ENCODE measurements at regions of chr19 and their contacts with region 1.

Region 1: DNA sequence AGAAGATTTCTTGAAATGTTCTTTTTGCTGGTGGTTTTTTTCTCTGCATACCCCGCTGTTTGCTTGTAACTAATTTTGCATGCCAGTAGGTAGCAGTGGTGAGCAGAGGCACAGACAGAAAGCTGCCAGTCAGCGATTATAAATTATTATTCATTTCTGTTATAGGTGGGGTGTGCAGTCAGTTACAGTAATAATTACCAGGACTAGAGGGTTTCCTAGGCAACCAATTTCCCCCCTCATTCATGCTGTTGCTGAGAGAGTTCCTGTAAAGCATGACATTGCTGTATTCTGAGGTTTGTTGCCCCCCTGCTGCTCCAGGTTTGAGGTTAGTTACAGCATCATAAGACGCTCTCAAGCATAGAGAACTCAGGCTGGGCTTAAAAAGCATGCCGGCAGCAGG is 104.5 kb downstream of the URI1 start:
- DNase-seq: peak; percentile 33
- ATAC-seq: peak; percentile 92
- H3K4me3 ChIP-seq: no peak overlapping the region
- H3K27ac ChIP-seq: no peak overlapping the region
- H3K4me1 ChIP-seq: no peaks in the 10 kb centered on the region
- H3K27me3 ChIP-seq: no peaks in the 10 kb centered on the region
- CTCF ChIP-seq: peak; percentile 56 to 64 (median 61)
- EP300 ChIP-seq: no peak
- POLR2A ChIP-seq: no peak
- RAD21 ChIP-seq: peak; percentile 57

Region 2: GRCh38 chr19:30036191-30037129 is 10.1 kb before region 1 on chr19:
- CTCF ChIA-PET with region 1: interaction called, 3 read pairs
- POLR2A ChIA-PET with region 1: interaction called, 4 read pairs
- RAD21 ChIA-PET with region 1: no interaction called
- SMC1A ChIA-PET with region 1: interaction called, 10 read pairs
- in situ Hi-C with region 1: no loop called
- intact Hi-C with region 1: no loop called
- DNase-seq: no peak
- ATAC-seq: no peak
- H3K4me3 ChIP-seq: no peak overlapping the region
- H3K27ac ChIP-seq: peak overlapping the region; percentile 8; the same call in 1 of the 2 replicates
- H3K4me1 ChIP-seq: no peaks in the 10 kb centered on the region
- H3K27me3 ChIP-seq: no peaks in the 10 kb centered on the region
- CTCF ChIP-seq: no peak
- EP300 ChIP-seq: no peak
- POLR2A ChIP-seq: no peak
- RAD21 ChIP-seq: no peak

Region 3: GRCh38 chr19:30064348-30064699 is 17.8 kb after region 1 on chr19:
- CTCF ChIA-PET with region 1: no interaction called
- POLR2A ChIA-PET with region 1: no interaction called
- RAD21 ChIA-PET with region 1: no interaction called
- SMC1A ChIA-PET with region 1: no interaction called
- in situ Hi-C with region 1: no loop called
- intact Hi-C with region 1: no loop called
- DNase-seq: no peak
- ATAC-seq: no peak
- H3K4me3 ChIP-seq: no peak overlapping the region
- H3K27ac ChIP-seq: no peak overlapping the region
- H3K4me1 ChIP-seq: no peaks in the 10 kb centered on the region
- H3K27me3 ChIP-seq: no peaks in the 10 kb centered on the region; a peak in 2 of 4 replicates
- CTCF ChIP-seq: no peak
- EP300 ChIP-seq: no peak
- POLR2A ChIP-seq: no peak
- RAD21 ChIP-seq: no peak

Region 4: DNA sequence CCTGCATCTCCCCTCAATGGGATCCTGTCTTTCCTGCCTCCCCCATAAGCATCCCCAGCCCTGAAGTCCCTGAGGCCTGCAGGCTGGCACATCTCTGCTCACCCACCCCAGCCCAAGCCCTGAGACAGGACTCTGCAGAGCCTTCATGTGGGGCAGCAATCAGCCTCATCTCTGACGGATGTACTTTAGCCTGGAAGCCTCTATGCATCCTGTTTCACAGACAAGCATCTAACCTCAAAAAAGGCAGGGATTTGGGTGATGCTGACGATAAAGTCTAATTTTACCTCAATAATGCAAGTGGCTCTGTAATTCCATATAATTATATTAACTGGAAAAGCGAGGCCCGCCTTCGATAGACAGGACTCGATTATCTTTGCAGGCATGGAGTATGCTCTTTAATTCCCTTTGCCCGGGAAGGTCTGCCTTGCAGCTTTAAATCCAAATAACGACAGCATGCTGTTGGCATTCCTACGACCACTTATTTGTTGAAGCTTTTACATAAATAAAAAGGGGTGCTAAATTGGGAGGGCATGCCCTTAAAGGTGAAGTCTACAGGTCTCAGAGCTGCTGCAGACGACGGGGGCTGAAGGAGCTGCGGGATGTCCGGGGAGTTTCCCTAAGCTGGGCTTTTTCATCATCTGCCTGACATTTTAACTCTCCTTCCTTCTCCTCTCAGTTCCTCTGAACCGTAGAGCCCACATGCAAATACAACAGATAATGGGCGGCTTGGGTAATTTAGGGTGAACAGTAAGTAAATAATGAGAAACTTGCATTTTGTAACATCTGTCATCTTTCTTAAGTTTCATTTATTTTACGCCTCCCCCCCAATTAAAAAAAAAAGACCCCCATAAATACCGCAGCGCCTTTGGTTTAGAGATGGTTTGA is 107.0 kb after region 1 on chr19:
- CTCF ChIA-PET with region 1: interaction called, 3 read pairs
- POLR2A ChIA-PET with region 1: no interaction called
- RAD21 ChIA-PET with region 1: no interaction called
- SMC1A ChIA-PET with region 1: no interaction called
- in situ Hi-C with region 1: no loop called
- intact Hi-C with region 1: loop called (anchors 5 kb)
- DNase-seq: peak; percentile 34
- ATAC-seq: peak; percentile 96
- H3K4me3 ChIP-seq: peak overlapping the region; percentile 6; the same call in 1 of the 2 replicates
- H3K27ac ChIP-seq: no peak overlapping the region
- H3K4me1 ChIP-seq: peaks cover 13% of the 10 kb centered on the region
- H3K27me3 ChIP-seq: no peaks in the 10 kb centered on the region
- CTCF ChIP-seq: no peak
- EP300 ChIP-seq: no peak
- POLR2A ChIP-seq: no peak
- RAD21 ChIP-seq: no peak